Common myeloid progenitor, CD34-positive (primary cell): ENCODE measurements at regions of chr10 and their contacts with region 1.

Region 1: GRCh38 chr10:43390759-43391158 is 18.2 kb downstream of the HNRNPF start:
- DNase-seq: peak; percentile 63 to 68 (median 64)
- H3K4me3 ChIP-seq: no peak overlapping the region
- H3K27ac ChIP-seq: no peak overlapping the region
- H3K4me1 ChIP-seq: peaks cover 8 to 26% (median 20%) of the 10 kb centered on the region in 4 experiments
- H3K27me3 ChIP-seq: no peaks in the 10 kb centered on the region

Region 2: DNA sequence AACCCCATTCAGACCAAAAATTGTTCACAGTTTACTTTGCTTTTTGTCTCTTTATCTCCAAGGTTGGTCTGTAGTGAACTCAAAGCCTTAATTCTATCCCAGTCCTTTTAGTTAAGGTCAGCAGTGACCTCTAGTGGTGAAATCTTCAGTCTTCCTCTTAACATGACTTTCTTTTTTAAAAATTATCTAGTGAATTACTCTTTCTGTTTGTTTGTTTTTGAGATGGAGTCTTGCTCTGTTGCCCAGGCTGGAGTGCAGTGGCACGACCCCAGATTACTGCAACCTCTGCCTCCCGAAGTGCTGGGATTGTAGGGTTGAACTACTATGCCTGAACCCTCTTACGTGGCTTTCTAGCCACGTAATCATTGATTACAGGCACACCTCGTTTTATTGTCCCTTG is 71.2 kb after region 1 on chr10:
- CTCF ChIA-PET with region 1: interaction called, 13 read pairs
- POLR2A ChIA-PET with region 1: interaction called, 3 read pairs
- DNase-seq: peak; percentile 83 to 93 (median 89)
- H3K4me3 ChIP-seq: no peak overlapping the region
- H3K27ac ChIP-seq: no peak overlapping the region
- H3K4me1 ChIP-seq: peaks cover 0 to 2% (median under 1%) of the 10 kb centered on the region in 4 experiments
- H3K27me3 ChIP-seq: no peaks in the 10 kb centered on the region